Sciatic nerve (tissue), 2 donors: ENCODE measurements at regions of chr2 and their contacts with region 1.

Region 1: DNA sequence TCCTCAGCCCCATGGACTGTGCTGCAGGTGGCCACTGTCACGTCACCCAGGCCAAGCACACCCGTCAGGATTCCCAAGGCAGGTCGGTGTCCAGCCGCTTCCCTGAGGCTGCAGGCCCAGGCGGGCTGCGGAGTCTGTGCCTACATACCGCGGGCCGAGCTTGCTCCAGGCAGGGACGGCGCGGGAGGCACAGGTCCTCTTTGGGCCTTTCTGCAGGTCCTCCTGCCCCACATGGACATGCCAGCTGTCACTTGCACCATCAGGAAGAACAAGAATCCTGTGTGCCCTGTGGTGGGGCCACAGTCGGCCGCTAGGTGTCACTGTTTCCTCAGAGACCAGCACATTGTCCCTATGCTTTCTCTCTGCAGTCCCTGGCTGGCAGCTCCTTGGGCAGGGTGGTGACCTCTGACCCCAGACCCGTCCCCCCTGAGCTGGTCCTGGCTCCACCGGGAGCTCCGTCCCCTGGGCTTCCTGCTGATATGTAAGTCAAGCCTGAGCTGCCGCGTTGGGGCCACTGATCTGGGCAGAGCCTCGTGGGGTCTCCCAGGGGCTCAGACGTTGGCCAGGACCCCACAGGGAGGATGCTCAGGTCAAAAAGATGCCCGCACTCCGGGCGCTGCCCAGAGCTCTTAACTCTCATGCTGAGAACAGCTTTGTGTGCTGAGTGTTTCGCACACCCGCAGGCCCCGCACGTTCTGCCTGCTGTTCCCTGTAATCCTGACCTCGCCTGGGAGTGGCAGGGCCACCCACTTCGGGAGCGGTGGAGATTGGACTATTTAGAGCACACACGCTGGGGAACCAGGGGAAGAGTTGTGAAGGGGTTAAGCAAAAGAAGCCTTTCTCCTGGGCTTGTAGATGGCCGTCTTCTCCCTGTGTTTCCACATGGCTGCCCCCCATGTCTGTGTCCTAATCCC is 17.3 kb upstream of the AGXT start:
- DNase-seq: peak; percentile 92
- ATAC-seq: peak; percentile 95

Region 2: GRCh38 chr2:240896871-240897692 is 45.7 kb after region 1 on chr2:
- intact Hi-C with region 1: loop called (anchors 1 kb)
- DNase-seq: no peak
- ATAC-seq: no peak